Esophagus muscularis mucosa (tissue), 4 donors: ENCODE measurements at regions of chr2 and their contacts with region 1.

Region 1: GRCh38 chr2:28751252-28751955 is at the start of gene PPP1CB:
- DNase-seq: peak; percentile 99
- H3K4me3 ChIP-seq: peak within 1 kb of the TSS; percentile 72 to 96 (median 95)
- H3K27ac ChIP-seq: peak within 1 kb of the TSS; percentile 94 to 100 (median 100)
- H3K4me1 ChIP-seq: peaks cover 50 to 65% (median 51%) of the 10 kb centered on the region in 4 donors
- H3K27me3 ChIP-seq: no peaks in the 10 kb centered on the region
- CTCF ChIP-seq: peak; percentile 24 to 41 (median 29)
- EP300 ChIP-seq: no peak
- POLR2A ChIP-seq: peak; percentile 77
- total RNA-seq, gene PPP1CB: 658 to 1,191 (median 759) TPM

Region 2: DNA sequence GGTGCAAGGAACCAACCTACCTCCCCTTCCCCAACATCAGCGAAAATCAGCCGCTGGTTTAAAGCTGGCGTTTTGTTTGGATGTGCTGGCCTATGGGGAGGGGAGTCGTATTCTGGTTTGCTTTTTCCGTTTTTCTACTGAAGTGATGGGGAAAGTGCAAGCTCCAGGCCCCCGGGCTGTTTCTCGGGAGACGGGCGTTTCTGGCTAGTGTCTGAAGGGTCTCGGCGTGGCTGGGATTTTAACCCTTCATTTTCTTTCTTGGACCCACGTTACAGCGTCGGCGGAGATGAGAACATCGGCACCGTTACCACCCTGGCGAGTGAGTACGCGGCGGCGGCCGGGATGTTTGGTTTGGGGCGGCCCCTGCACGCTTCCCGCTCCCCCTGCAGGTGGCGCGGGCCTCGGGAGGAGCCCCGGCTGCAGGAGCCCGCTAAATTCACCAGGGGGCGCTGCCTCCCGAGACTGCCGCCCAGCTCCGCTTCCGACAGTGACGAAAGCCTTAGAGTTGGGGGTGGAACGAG is 184.8 kb before region 1 on chr2:
- intact Hi-C with region 1: loop called (anchors 5 kb)
- DNase-seq: peak; percentile 95
- H3K4me3 ChIP-seq: peak overlapping the region; percentile 51 to 62 (median 60)
- H3K27ac ChIP-seq: peak overlapping the region; percentile 61 to 76 (median 72)
- H3K4me1 ChIP-seq: peaks cover 5 to 19% (median 13%) of the 10 kb centered on the region in 4 donors
- H3K27me3 ChIP-seq: no peaks in the 10 kb centered on the region
- CTCF ChIP-seq: peak in 2 of 3 experiments; percentile 100
- EP300 ChIP-seq: no peak
- POLR2A ChIP-seq: no peak

Region 3: GRCh38 chr2:28594289-28595108 is 156.9 kb before region 1 on chr2:
- intact Hi-C with region 1: loop called (anchors 1 kb)
- DNase-seq: peak; percentile 98
- H3K4me3 ChIP-seq: peak overlapping the region; percentile 11 to 25 (median 18)
- H3K27ac ChIP-seq: peak overlapping the region; percentile 85 to 94 (median 92)
- H3K4me1 ChIP-seq: peaks cover 34 to 58% (median 53%) of the 10 kb centered on the region in 4 donors
- H3K27me3 ChIP-seq: no peaks in the 10 kb centered on the region
- CTCF ChIP-seq: peak; percentile 77 to 92 (median 86)
- EP300 ChIP-seq: no peak
- POLR2A ChIP-seq: no peak

Region 4: GRCh38 chr2:28666496-28667184 is 84.8 kb before region 1 on chr2:
- intact Hi-C with region 1: loop called (anchors 1 kb)
- DNase-seq: no peak
- H3K4me3 ChIP-seq: no peak overlapping the region
- H3K27ac ChIP-seq: peak overlapping the region; percentile 88 to 92 (median 90)
- H3K4me1 ChIP-seq: peaks cover 38 to 73% (median 64%) of the 10 kb centered on the region in 4 donors
- H3K27me3 ChIP-seq: no peaks in the 10 kb centered on the region
- CTCF ChIP-seq: no peak
- EP300 ChIP-seq: no peak
- POLR2A ChIP-seq: no peak

Region 5: GRCh38 chr2:28681158-28681571 is 70.2 kb before region 1 on chr2:
- intact Hi-C with region 1: loop called (anchors 5 kb)
- DNase-seq: no peak
- H3K4me3 ChIP-seq: no peak overlapping the region
- H3K27ac ChIP-seq: peak overlapping the region; percentile 77 to 85 (median 83)
- H3K4me1 ChIP-seq: peaks cover 54 to 86% (median 82%) of the 10 kb centered on the region in 4 donors
- H3K27me3 ChIP-seq: no peaks in the 10 kb centered on the region
- CTCF ChIP-seq: no peak
- EP300 ChIP-seq: no peak
- POLR2A ChIP-seq: no peak

Region 6: GRCh38 chr2:28855193-28855592 is 103.8 kb after region 1 on chr2:
- intact Hi-C with region 1: no loop called
- DNase-seq: no peak
- H3K4me3 ChIP-seq: no peak overlapping the region
- H3K27ac ChIP-seq: no peak overlapping the region
- H3K4me1 ChIP-seq: no peaks in the 10 kb centered on the region
- H3K27me3 ChIP-seq: no peaks in the 10 kb centered on the region
- CTCF ChIP-seq: no peak
- EP300 ChIP-seq: no peak
- POLR2A ChIP-seq: no peak

Region 7: GRCh38 chr2:29075894-29076705 is 324.7 kb after region 1 on chr2:
- intact Hi-C with region 1: no loop called
- DNase-seq: no peak
- H3K4me3 ChIP-seq: no peak overlapping the region
- H3K27ac ChIP-seq: no peak overlapping the region
- H3K4me1 ChIP-seq: peaks cover 0 to 9% (median 4%) of the 10 kb centered on the region in 4 donors
- H3K27me3 ChIP-seq: no peaks in the 10 kb centered on the region
- CTCF ChIP-seq: no peak
- EP300 ChIP-seq: no peak
- POLR2A ChIP-seq: no peak